ENCODE measurements at regions of chr3 and their contacts with region 1.

Region 1: DNA sequence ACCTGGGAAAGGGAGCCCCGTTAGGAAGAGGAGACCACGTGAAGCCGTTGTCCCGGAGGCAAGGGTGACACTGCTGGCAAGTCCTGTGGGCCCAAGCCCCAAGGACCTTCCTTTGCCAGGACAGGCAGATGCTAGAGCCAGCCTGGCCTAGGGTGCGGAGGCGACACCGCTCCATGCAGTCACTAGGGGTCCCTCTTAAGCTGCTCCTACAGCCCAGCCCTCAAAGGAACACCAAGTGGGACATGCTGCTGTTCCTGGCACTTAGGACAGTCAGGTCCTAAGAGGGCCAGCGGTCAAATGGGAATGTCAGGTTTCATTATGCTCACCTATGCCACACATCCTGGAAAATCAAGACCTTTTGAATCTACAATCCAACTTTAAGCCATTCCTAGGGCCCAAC is 59.7 kb downstream of the RPN1 start:
- DNase-seq: no peak
- H3K4me3 ChIP-seq: no peak overlapping the region
- H3K27ac ChIP-seq: no peak overlapping the region
- H3K4me1 ChIP-seq: no peaks in the 10 kb centered on the region; the same call in 1 of the 2 replicates
- H3K27me3 ChIP-seq: no peaks in the 10 kb centered on the region

Region 2: DNA sequence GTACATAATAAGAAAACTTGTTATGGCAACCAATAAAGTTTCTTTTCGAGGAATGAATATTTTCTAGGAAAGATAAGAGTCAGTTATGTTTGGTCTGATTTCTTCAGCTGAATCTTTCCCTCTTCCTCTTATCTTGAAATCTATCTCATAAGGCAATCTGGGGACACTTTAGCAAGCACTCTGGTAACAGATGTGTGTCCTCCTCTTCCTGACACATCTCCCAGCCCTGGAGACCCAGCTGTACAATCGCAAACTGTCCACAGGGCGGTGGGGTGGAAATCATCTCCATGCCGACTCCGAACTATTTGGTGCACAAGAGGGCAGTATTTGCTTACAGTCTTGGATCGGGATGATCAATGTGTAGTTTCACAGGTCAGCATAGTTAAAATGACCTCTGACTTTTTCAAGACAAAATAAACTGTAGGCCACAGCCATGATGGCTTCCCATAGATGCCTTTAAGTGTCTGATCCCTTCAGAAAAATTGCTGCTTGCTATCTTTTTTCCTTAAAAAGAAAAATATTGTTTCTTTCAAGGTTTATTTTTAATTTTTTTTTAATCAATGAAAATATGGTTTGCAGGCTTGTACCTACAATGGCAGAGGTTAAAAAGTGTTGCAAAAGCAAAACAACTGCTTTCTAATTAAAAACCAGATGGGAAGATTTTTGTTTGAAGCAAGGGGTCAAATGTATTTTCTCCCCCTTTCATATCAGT is 420.0 kb before region 1 on chr3:
- in situ Hi-C with region 1: loop called (anchors 10 kb)
- DNase-seq: peak; percentile 92
- H3K4me3 ChIP-seq: no peak overlapping the region
- H3K27ac ChIP-seq: no peak overlapping the region
- H3K4me1 ChIP-seq: no peaks in the 10 kb centered on the region
- H3K27me3 ChIP-seq: no peaks in the 10 kb centered on the region

Region 3: GRCh38 chr3:128426128-128426921 is 164.6 kb before region 1 on chr3:
- in situ Hi-C with region 1: loop called (anchors 10 kb)
- DNase-seq: peak; percentile 69
- H3K4me3 ChIP-seq: peak overlapping the region; percentile 53
- H3K27ac ChIP-seq: no peak overlapping the region
- H3K4me1 ChIP-seq: no peaks in the 10 kb centered on the region
- H3K27me3 ChIP-seq: peaks cover under 1% of the 10 kb centered on the region; the same call in 1 of the 2 replicates